Activated T-helper 1 cell treated with anti-CD3 and anti-CD28 coated beads, Interleukin-12 subunit alpha, Interleukin-12 subunit beta, Interleukin-2, Interleukin-4 antibody, amounts not matched to agents 30 ng/mL and 10 ng/mL and 1 ng/mL, durations not matched to agents 14 hours and 24 hours and 36 hours (primary cell): ENCODE measurements at regions of chr5 and their contacts with region 1.

Region 1: GRCh38 chr5:157464519-157465171 is 4.6 kb downstream of the NIPAL4 start:
- DNase-seq: peak; percentile 42
- H3K4me3 Mint-ChIP-seq: peak overlapping the region; percentile 36
- H3K27ac Mint-ChIP-seq: peak overlapping the region; percentile 83
- H3K4me1 Mint-ChIP-seq: peaks cover 48% of the 10 kb centered on the region
- H3K27me3 Mint-ChIP-seq: peaks cover 17% of the 10 kb centered on the region

Region 2: DNA sequence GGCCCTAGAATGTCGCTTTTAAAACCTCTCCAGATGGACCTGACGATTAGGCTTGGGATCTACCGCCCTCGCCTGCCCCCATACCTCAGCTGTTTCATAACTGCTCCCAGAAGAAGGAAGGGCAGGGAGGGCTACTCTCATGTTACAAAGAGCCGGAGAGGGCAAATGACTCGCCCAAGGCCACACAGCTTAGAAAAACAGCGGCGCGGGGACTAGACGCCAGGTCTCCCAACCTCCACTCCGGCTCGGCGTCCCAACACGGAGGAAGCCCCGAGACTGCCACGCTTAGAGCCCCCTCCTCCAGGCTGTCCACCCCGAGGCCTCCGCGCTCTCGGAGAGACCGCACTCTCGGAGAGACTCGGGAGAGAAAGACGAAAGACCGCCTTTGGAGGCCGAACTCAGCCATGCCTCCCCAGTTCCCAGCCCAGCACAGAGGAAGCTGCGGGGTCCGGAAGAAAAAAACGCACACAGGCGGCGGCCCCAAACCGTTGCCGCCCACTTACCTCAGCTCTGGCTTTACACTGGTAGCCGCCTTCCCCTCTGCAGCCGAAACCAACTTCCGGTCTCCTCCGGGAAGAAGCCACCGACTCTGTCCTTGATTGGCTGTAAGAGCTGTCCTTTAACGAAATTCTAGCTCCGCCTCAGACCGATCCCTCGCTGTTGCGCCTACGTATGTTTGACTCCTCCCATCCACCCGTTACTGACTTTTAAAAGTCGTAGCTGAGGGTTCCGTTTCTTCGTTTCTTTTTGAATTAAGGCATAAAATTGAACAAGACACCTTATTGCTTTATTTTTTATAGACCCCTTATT is 322.1 kb before region 1 on chr5 and contains the start of gene MED7:
- intact Hi-C with region 1: loop called (anchors 2 kb)
- DNase-seq: peak; percentile 95
- H3K4me3 Mint-ChIP-seq: peak within 1 kb of the TSS; percentile 95
- H3K27ac Mint-ChIP-seq: peak within 1 kb of the TSS; percentile 99
- H3K4me1 Mint-ChIP-seq: peaks cover 42% of the 10 kb centered on the region
- H3K27me3 Mint-ChIP-seq: no peaks in the 10 kb centered on the region
- total RNA-seq, gene MED7: 15.0 and 15.5 TPM in 2 replicates

Region 3: DNA sequence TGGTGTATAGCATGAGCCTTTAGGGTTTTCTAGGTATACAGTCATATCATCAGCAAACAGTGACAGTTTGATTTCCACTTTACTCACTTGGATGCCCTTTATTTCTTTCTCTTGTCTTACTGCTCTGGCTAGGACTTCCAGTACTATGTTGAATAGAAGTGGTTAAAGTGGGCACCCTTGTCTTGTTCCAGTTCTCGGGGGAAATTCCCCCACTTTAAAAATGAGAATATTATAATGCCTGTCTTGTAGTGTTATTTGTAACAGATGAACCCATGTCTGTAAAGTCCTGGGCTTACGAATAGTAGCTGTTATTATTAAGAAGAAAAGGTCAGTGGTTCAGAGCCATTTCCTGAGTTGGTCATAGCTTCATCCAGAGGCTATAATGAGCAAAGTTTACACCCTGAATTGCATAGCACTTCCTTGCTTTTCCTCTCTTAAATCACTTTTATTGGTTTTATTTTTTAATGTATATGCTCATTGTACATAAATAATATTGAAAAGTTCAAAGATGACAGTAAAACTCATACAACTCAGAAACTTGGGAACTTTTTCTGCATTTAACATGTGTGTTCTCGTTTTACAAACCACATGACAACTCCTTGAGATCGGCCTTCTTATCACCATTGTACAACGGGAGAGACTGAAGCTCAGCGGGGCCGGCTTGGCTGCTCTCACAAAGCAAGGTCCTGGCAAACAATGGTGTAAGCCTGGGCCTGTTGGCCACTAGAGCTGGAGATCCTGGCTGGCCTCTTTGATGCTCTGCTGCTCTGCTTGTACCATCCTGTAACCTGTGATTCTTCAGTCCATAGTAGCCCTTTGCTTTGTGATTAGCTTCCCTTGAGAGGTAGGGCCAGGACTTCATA is 113.5 kb before region 1 on chr5:
- intact Hi-C with region 1: loop called (anchors 1 kb)
- DNase-seq: no peak
- H3K4me3 Mint-ChIP-seq: peak overlapping the region; percentile 25
- H3K27ac Mint-ChIP-seq: peak overlapping the region; percentile 89
- H3K4me1 Mint-ChIP-seq: peaks cover 55% of the 10 kb centered on the region
- H3K27me3 Mint-ChIP-seq: no peaks in the 10 kb centered on the region

Region 4: GRCh38 chr5:157390551-157391297 is 73.9 kb before region 1 on chr5:
- intact Hi-C with region 1: loop called (anchors 2 kb)
- DNase-seq: peak; percentile 47
- H3K4me3 Mint-ChIP-seq: no peak overlapping the region
- H3K27ac Mint-ChIP-seq: peak overlapping the region; percentile 90
- H3K4me1 Mint-ChIP-seq: peaks cover 21% of the 10 kb centered on the region
- H3K27me3 Mint-ChIP-seq: no peaks in the 10 kb centered on the region

Region 5: DNA sequence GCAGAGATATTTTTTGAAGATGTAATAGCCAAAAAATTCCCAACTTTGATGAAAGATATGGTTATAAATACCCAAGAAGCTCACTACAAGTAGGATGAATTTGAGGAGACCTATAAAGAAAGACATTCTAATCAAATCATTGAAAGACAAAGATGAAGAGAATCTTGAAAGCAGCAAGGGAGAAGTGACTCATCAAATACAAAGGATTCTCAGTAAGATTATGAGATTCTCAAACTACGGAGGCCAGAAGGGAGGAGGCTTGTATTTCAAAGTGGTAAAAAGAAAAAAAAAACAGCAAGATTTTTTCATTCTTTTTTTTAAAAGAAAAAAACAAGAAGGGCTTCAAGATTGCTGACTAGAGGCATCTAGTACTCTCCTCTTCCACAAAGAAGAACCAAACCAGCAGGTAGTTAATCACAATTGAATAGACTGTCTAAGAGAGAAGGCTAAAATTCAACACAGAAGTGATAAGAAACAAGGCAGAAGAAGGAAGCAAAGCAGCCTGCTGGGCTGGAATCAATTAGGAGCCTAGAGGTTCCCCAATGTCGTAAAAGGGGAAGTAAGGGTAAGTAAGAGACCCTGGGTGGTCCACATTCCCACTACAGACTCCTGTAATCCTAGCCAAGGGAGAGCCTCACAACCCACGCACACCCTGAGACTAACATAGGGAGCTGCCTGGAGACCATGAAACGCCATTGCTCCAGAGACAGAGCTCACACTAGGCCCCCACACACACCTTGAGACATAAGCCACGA is 63.7 kb before region 1 on chr5:
- intact Hi-C with region 1: loop called (anchors 2 kb)
- DNase-seq: no peak
- H3K4me3 Mint-ChIP-seq: no peak overlapping the region
- H3K27ac Mint-ChIP-seq: no peak overlapping the region
- H3K4me1 Mint-ChIP-seq: peaks cover 12% of the 10 kb centered on the region
- H3K27me3 Mint-ChIP-seq: peaks cover 7% of the 10 kb centered on the region

Region 6: GRCh38 chr5:157603333-157604190 is 138.9 kb after region 1 on chr5:
- intact Hi-C with region 1: loop called (anchors 2 kb)
- DNase-seq: peak; percentile 74
- H3K4me3 Mint-ChIP-seq: peak overlapping the region; percentile 59
- H3K27ac Mint-ChIP-seq: peak overlapping the region; percentile 88
- H3K4me1 Mint-ChIP-seq: peaks cover 79% of the 10 kb centered on the region
- H3K27me3 Mint-ChIP-seq: no peaks in the 10 kb centered on the region

Region 7: GRCh38 chr5:157689942-157690689 is 225.5 kb after region 1 on chr5:
- intact Hi-C with region 1: no loop called
- DNase-seq: no peak
- H3K4me3 Mint-ChIP-seq: no peak overlapping the region
- H3K27ac Mint-ChIP-seq: no peak overlapping the region
- H3K4me1 Mint-ChIP-seq: no peaks in the 10 kb centered on the region
- H3K27me3 Mint-ChIP-seq: no peaks in the 10 kb centered on the region